Posterior vena cava (tissue), 2 donors: ENCODE measurements at regions of chr2 and their contacts with region 1.

Region 1: GRCh38 chr2:201517094-201517493 is 65.6 kb downstream of the STRADB start:
- DNase-seq: no peak

Region 2: DNA sequence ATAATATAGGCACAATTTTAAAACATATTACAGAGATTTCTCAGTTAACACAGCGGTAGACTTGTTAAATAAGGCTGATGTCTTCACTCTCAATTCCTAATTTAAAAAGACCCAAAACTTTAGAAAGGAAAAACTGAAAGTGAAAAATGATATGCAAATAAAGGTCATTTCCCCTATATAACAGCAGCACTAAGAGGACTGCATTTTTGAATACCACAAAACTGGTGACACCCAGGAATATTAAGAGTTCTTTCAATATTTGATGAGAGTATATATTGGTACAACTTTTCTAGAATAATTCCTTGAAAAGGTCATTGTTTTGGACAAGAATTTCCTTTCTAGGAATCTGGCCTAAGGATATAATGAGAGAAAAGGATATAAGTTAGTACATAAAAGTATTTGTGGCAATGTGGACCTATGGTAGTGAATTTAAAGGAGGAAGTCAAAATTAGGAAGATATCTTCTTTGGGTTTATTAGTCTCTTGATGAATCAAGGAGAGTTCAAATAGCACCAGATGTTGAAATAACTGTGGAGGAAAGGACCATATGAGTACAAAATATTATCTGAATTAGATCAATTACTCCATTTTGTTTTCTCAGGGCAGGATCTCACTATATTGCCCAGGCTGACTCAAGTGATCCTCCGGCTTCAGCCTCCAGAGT is 55.9 kb after region 1 on chr2:
- intact Hi-C with region 1: loop called in 1 of 2 experiments (anchors 2 kb)
- DNase-seq: no peak

Region 3: GRCh38 chr2:201600906-201601305 is 83.8 kb after region 1 on chr2:
- intact Hi-C with region 1: no loop called
- DNase-seq: no peak